ENCODE measurements at regions of chr1 and their contacts with region 1.

Region 1: GRCh38 chr1:15788624-15789301 is 18.7 kb downstream of the UQCRHL start:
- DNase-seq: no peak
- H3K4me3 ChIP-seq: no peak overlapping the region
- H3K27ac ChIP-seq: peak overlapping the region; percentile 24
- H3K27me3 ChIP-seq: no peaks in the 10 kb centered on the region
- CTCF ChIP-seq: no peak

Region 2: DNA sequence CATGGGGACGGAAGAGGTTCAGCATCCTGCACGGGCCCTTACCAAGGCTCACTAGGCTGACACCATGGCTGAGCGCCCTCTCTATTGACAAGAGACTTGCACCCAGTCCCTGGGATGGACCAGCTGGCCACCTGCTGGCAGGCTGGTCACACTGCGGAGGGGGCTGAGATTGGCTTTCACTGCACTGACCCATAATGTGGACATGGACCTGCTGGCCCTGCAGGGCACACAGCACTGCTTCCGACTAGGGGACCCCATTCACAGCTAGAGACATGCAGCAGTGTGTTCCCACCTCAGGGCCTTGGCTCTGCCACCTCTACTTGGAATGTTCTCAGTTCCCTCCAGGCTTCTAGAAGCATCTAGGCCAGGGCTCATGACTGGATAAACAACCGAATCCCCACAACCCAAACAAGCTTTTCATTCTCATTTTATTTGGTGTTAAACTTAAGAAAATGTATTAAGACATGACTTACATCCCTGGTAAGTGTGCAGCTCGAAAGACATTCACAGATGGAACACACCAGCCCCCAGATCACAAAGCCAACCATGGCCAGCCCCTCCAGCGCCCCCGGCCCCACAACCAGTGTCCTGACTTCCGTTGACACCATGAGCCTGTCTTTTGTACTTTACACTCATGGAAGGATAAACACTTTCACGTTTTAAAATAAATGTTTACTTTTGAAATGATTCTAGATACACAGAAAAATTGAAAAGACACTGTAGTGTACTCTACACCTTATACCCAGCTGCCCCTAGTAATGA is 206.0 kb after region 1 on chr1:
- CTCF ChIA-PET with region 1: interaction called, 31 read pairs
- POLR2A ChIA-PET with region 1: no interaction called
- DNase-seq: no peak
- H3K4me3 ChIP-seq: no peak overlapping the region
- H3K27ac ChIP-seq: no peak overlapping the region
- H3K27me3 ChIP-seq: no peaks in the 10 kb centered on the region
- CTCF ChIP-seq: peak; percentile 95

Measured in AG04450 (cell line).